ENCODE measurements at regions of chr4 and their contacts with region 1.

Region 1: DNA sequence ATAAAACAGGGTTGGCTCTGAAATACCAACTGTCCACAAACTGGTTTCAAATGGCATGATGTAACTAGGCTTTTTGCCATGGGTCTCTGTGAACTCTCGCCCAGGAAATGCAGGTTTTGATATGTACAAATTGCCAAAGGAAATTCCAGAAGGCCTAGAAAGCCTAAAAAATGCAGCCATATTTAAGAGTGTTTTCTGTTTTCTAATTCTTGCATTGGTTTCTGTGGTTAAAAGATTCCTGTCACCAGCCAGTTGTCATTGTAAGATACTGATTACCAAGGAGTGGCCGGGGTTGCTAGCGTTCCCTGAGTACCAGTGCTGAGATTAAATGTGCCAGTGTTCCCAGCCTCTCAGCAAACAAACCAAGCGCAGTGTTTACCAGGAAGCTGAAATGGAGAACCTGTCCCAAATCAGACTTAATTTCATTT is 53.9 kb upstream of the SORBS2 start:
- DNase-seq: no peak

Region 2: DNA sequence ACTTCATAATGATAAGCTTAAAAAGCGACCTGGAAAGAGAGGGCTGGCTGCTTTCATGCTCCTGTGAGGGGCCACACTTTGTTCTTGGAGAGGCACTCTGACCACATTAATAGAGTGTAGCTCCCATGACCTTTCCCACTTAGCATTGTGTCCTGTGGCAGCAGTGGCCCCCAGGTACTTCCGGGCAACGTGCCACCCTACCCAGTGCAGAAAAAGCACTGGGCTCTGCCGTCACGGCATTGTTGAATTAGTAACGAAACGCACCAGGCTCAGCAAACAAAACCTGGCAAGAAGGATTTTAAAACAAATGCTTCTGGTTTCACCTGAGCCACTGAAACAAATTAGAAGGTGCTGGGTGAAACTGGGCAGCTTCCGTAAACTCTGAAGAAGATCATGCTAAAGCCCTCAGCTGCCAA is 48.5 kb before region 1 on chr4:
- intact Hi-C with region 1: loop called (anchors 5 kb)
- DNase-seq: no peak

Region 3: GRCh38 chr4:185847352-185848107 is 18.4 kb before region 1 on chr4:
- intact Hi-C with region 1: loop called (anchors 1 kb)
- DNase-seq: no peak

Measured in cardiac septum (tissue), 1 donor.